ENCODE measurements at regions of chr11 and their contacts with region 1.

Region 1: GRCh38 chr11:5476184-5476819 is 12.2 kb upstream of the OR52D1 start:
- DNase-seq: peak; percentile 10
- H3K4me3 ChIP-seq: no peak overlapping the region
- CTCF ChIP-seq: peak; percentile 78

Region 2: GRCh38 chr11:5420993-5421392 is 55.3 kb before region 1 on chr11:
- CTCF ChIA-PET with region 1: no interaction called
- POLR2A ChIA-PET with region 1: no interaction called
- DNase-seq: no peak
- H3K4me3 ChIP-seq: no peak overlapping the region
- CTCF ChIP-seq: no peak

Region 3: DNA sequence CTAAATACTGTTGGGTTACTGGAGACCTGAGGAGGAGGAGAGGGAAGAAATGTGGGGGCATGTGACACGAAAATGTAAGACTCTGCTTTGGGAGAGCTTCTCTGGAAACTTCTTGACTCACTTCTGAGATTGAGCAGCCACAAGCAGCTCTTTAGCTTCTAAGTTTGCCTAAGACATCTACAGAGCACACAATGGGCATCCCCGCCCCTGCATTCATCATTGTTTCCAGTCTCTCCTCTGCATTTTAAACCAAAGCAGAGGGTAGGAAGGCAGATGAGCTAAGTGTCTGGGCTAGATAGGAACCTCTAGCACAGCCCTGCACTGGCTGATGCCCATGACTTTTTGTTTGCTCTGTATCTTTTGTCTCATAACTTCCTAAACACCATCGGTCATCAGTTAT is 10.1 kb after region 1 on chr11:
- CTCF ChIA-PET with region 1: interaction called, 11 read pairs
- POLR2A ChIA-PET with region 1: no interaction called
- DNase-seq: no peak
- H3K4me3 ChIP-seq: no peak overlapping the region
- CTCF ChIP-seq: no peak

Region 4: DNA sequence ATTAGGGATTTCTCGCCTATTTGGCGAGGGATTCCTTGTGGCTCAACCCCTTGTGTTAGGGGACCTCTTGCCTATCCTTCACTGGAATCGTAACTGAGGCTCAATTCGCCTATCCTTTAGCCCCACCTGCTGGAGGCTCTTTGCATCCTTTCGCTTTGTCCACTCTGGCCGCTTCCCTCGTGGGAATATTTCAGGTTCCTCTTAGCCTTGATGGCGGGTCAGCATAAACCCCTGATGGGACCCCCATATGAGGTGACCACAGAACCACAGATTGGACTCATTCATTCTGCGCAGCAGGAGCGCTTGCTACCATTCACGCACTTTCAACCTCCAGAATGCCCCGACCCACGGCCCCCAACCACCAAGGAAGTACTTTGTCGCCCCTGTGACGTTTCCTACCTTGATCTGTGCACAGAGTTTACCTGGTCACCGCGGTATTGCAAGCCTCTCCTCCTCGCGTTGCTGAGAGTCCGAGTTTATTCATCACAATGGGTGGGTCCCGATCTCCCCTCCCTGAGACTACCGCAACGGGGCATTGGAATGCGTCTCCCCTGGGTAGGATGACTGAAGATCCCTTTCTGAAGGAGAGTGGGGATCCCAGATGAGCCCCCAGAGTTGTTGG is 332.3 kb after region 1 on chr11 and contains the start of gene OR52N2:
- CTCF ChIA-PET with region 1: interaction called, 30 read pairs
- POLR2A ChIA-PET with region 1: no interaction called
- DNase-seq: peak; percentile 16
- H3K4me3 ChIP-seq: peak within 1 kb of the TSS; percentile 64
- CTCF ChIP-seq: peak; percentile 78

Region 5: DNA sequence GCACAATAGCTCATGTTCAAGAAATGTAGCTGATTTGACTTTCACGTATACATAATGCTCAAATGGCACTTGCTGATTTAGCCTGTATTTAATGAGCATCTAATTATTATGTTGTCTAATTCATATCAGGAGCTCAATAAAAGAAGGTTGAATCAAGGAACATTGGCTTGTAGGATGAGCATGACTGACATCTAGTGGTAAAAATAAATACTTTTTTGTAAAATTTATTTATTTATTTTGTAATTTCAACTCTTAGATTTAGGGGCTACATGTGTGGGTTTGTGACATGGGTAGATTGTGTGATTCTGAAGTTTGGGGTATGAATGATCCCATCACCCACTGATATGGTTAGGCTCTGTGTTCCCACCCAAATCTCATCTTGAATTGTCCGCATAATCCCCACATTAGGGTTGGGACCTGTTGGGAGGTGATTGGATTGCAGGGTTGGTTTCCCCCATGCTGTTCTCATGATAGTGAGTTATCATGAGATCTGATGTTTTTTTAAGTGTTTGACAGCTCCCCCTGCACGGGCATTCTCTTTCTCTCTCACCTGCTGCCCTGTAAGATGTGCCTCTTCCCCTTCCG is 415.0 kb after region 1 on chr11:
- CTCF ChIA-PET with region 1: interaction called, 10 read pairs
- POLR2A ChIA-PET with region 1: no interaction called
- DNase-seq: no peak
- H3K4me3 ChIP-seq: no peak overlapping the region
- CTCF ChIP-seq: no peak

Measured in AG04449 (cell line).